ENCODE measurements at regions of chr1 and their contacts with region 1.

Region 1: DNA sequence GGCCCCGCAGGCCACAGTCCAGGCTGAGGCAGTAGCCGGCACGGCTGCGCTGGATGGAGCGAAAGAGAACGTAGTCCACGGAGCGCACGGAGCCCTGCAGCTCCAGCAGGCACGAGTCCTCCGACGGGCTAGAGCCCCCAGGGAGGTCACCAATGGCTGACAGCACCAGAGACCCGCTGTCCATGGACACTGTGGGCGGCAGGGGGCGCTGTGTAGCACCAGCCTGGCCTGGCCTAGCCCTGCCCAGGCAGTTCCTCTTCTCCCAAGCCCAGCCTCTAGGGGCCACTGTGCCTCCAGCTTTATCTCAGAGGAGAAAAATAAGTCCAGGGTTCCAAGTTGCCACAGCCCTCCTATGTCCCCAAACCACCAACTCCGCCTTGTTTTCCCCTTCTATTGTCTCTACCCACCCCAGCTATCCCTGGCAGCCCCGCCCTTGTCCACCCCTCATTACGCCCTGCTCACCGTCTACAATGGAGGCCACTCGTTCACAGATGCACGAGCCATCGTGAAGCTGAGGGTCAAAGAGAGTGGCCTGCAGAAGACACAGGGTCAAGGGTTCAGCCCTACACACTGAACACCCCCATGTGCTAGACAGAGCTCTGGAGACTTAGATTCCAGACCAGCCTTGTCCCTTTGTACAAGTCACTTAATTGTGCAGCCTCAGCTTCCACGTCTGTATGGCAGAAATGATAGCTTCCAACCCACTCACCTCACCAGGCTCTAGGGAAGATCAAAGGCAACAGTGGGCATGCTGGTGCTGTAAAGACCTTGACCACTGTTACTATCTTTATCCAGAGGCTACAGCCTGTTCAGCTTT is 4.4 kb downstream of the ENTREP3 start:
- DNase-seq: peak; percentile 91 to 98
- ATAC-seq: peak; percentile 82 to 92
- H3K4me3 ChIP-seq: no peak overlapping the region
- H3K27ac ChIP-seq: peak overlapping the region in 1 of 2 experiments; percentile 76; a peak in 3 of 6 replicates
- H3K4me1 ChIP-seq: peaks cover 19% of the 10 kb centered on the region
- CTCF ChIP-seq: peak; percentile 99
- EP300 ChIP-seq: no peak
- POLR2A ChIP-seq: no peak
- RAD21 ChIP-seq: peak; percentile 88 to 90

Region 2: DNA sequence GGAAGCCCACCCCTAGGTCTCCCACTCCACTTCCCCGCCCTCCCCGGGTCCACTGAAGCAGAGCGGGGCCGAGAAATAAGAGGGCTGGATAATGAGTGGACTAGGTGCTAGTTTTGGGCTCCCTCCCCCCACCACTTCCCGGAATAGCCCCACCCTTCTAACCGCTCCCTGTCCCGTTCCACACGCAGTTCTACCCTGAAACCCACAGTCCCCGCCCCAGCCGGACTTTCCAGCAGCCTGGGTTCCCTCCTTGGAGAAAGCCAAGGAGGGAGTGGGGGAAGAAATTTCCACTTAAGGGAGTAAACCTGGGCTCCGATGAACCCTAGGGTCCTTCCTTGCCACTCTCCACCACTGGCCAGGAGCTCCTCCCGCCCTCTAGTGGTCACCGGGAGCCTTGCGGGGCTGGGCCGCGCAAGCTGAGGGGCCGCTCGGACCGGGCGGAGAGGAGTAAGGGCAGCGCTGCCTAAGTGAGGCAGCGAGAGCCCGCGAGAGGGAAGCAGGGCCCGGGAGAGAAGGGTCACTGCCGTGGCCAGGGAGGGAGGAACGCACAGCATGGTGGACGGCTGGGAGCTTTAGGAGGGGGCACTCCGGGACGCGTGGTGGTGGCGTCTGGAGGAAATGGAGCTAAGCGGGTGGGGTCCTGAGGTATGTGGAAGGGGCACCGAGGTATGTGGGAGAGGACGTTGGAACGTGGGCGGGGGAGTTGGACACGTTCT is 57.4 kb before region 1 on chr1:
- CTCF ChIA-PET with region 1: interaction called, 102 read pairs
- POLR2A ChIA-PET with region 1: no interaction called
- DNase-seq: peak; percentile 84 to 93
- ATAC-seq: peak; percentile 76 to 90
- H3K4me3 ChIP-seq: peak overlapping the region; percentile 79
- H3K27ac ChIP-seq: peak overlapping the region; percentile 84 to 96
- H3K4me1 ChIP-seq: peaks cover 22% of the 10 kb centered on the region
- CTCF ChIP-seq: peak; percentile 95
- EP300 ChIP-seq: no peak
- POLR2A ChIP-seq: peak; percentile 49; the same call in 1 of the 2 replicates
- RAD21 ChIP-seq: peak; percentile 59 to 64; a peak in 4 of 5 replicates

Region 3: DNA sequence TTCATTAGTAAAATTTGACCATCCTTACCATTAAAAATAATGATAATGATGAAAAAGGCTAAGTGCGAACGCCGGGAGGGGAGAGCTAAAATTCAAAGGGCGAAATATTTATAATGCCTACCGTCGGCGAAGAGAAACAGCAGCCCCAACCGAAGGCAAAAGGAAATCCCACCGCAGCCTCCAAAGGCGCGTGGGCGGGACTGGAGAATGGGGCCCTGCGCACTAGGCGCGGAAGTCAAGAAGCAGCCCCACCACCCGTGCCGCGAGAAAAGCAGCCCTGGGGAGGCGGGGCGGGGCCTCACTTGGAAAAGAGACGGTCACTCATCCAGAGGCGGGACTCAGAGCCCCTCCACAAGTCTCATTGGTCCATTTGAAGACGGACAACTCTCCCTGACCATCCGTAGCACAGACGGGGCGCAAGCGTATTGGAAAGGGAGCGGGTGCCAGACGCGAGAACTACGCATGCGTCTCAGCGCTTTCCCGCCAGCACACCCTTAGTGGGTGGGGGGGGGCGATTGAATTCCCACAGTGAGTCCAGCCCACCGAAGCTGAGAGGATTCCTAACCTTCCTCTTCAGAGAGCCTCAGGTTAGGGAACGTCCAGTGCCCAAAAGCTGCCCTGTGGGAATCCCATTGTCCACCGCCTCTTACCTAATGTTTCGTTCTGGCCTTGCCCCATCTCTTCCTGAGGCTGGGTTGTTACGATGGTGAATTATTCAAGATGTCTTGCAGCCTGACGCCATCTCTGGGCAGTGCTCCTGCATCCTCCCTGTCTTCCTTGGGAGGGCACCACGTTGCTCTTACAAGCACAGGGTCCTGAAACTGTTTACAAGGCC is 23.4 kb before region 1 on chr1:
- CTCF ChIA-PET with region 1: interaction called, 27 read pairs
- POLR2A ChIA-PET with region 1: interaction called, 3 read pairs
- DNase-seq: peak; percentile 99 to 100
- ATAC-seq: peak; percentile 94 to 97
- H3K4me3 ChIP-seq: peak overlapping the region; percentile 57
- H3K27ac ChIP-seq: peak overlapping the region; percentile 88 to 90
- H3K4me1 ChIP-seq: peaks cover 43% of the 10 kb centered on the region
- CTCF ChIP-seq: no peak
- EP300 ChIP-seq: no peak
- POLR2A ChIP-seq: peak; percentile 82
- RAD21 ChIP-seq: no peak

Region 4: DNA sequence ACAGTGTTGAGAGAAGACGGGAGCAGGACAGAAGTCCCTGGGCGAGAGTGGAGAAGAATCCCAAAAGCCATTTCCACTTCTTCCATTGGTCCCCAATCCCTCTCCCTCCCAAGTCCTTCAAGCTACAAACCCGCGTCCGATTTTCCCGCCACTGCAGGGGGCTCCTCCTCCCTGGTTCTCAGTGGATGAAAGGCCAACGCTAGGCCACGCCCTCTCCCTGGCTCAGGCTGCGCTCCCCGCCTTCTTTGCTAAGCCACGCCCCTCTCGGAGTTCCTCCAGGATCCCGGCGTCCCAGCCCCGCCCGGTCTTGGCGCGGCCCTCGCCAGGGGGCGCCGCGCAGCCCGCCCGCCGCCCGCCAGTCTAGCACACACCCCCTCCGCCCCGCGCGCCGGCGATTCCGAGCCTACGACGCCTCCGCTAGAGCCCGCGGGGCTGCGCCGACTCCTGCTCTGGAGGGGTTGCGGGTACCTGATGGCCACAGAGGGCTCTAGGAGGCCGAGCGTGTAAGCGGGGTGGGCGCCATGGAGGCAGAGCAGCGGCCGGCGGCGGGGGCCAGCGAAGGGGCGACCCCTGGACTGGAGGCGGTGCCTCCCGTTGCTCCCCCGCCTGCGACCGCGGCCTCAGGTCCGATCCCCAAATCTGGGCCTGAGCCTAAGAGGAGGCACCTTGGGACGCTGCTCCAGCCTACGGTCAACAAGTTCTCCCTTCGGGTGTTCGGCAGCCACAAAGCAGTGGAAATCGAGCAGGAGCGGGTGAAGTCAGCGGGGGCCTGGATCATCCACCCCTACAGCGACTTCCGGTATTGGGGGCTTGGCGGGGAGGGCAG is 26.4 kb after region 1 on chr1 and contains the start of gene HCN3:
- CTCF ChIA-PET with region 1: interaction called, 326 read pairs
- POLR2A ChIA-PET with region 1: interaction called, 11 read pairs
- DNase-seq: peak; percentile 95 to 97
- ATAC-seq: peak; percentile 68 to 82
- H3K4me3 ChIP-seq: peak within 1 kb of the TSS; percentile 93
- H3K27ac ChIP-seq: peak within 1 kb of the TSS; percentile 76 to 87
- H3K4me1 ChIP-seq: peaks cover 14% of the 10 kb centered on the region; the same call in 2 of the 3 replicates
- CTCF ChIP-seq: peak; percentile 87
- EP300 ChIP-seq: no peak
- POLR2A ChIP-seq: no peak; the same call in 1 of the 2 replicates
- RAD21 ChIP-seq: peak; percentile 33 to 69; a peak in 4 of 5 replicates
- polyA plus RNA-seq, gene HCN3: 4.1 and 7.3 TPM in 2 replicates

Region 5: GRCh38 chr1:155308493-155309422 is 57.9 kb after region 1 on chr1 and contains the start of gene FDPS:
- CTCF ChIA-PET with region 1: interaction called, 54 read pairs
- POLR2A ChIA-PET with region 1: interaction called, 3 read pairs
- DNase-seq: peak; percentile 98 to 99
- ATAC-seq: peak; percentile 98
- H3K4me3 ChIP-seq: peak within 1 kb of the TSS; percentile 97
- H3K27ac ChIP-seq: peak within 1 kb of the TSS; percentile 93 to 95
- H3K4me1 ChIP-seq: peaks cover 27% of the 10 kb centered on the region
- CTCF ChIP-seq: no peak
- EP300 ChIP-seq: no peak
- POLR2A ChIP-seq: peak; percentile 74
- RAD21 ChIP-seq: no peak
- polyA plus RNA-seq, gene FDPS: 143 and 148 TPM in 2 replicates

Region 6: DNA sequence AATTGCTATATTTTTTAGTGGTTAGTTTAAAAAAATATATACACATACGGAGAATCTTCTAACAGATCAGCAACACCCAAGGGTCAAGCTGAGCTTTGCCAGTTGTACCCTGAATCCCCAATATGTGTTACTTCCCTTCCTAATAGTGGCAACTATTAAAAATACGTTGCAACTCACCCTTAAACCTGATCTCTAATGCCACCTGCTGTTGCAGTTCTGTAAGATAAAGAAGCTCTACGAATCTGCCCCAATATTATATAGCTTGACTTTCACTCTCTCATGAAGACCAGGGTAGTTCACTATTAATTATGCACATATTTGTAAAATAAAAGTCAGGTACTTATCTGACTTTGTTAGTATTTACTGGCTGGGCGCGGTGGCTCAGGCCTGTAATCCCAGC is 253.4 kb after region 1 on chr1:
- CTCF ChIA-PET with region 1: interaction called, 13 read pairs
- POLR2A ChIA-PET with region 1: no interaction called
- DNase-seq: peak; percentile 55
- ATAC-seq: peak; percentile 73 to 90; a peak in 5 of 6 replicates
- H3K4me3 ChIP-seq: no peak overlapping the region
- H3K27ac ChIP-seq: no peak overlapping the region
- H3K4me1 ChIP-seq: peaks cover 14% of the 10 kb centered on the region
- CTCF ChIP-seq: peak; percentile 46; the same call in 2 of the 3 replicates
- EP300 ChIP-seq: no peak
- POLR2A ChIP-seq: no peak
- RAD21 ChIP-seq: peak; percentile 65 to 69

Region 7: DNA sequence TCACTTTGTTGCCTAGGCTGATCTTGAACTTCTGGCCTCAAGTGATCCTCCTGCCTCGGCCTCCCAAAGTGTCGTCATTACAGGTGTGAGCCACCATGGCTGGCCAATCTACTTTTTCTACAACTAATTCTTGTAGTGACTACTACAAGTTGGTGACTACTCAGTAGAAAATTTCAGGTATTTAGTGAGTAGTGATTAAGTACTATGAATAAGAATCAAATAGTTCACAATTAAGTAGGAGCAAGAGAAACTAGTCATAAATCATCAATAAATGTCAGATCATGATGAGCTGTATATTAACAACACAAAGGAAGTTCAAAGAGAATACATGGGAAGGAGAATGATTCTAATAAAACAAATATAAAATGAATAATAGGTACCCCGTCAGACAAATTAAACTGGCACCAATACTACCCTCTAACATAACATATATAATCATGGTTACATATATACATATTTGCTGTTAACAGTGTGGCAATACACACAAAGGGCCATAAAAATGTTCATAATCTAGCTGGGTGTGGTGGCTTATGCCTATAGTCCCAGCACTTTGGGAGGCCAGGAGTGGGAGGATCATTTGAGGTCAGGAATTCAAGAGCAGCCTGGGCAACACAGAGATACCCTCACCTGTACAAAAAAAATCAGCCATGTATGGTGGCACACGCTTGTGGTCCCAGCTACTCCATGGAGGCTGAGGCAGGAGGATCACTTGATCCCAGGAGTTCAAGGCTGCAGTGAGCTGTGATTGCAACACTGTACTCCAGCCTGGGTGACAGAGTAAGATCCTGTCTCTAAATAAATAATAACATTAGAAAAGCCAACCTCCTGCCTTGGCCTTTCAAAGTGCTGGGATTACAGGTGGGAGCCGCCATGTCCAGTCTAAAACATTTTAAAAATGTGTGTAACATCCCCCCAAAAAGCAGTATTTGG is 418.7 kb after region 1 on chr1:
- CTCF ChIA-PET with region 1: interaction called, 12 read pairs
- POLR2A ChIA-PET with region 1: no interaction called
- DNase-seq: no peak
- ATAC-seq: no peak
- H3K4me3 ChIP-seq: no peak overlapping the region
- H3K27ac ChIP-seq: no peak overlapping the region
- H3K4me1 ChIP-seq: no peaks in the 10 kb centered on the region
- CTCF ChIP-seq: no peak
- EP300 ChIP-seq: no peak
- POLR2A ChIP-seq: no peak
- RAD21 ChIP-seq: no peak